PC-3 (cell line): ENCODE measurements at regions of chr12 and their contacts with region 1.

Region 1: DNA sequence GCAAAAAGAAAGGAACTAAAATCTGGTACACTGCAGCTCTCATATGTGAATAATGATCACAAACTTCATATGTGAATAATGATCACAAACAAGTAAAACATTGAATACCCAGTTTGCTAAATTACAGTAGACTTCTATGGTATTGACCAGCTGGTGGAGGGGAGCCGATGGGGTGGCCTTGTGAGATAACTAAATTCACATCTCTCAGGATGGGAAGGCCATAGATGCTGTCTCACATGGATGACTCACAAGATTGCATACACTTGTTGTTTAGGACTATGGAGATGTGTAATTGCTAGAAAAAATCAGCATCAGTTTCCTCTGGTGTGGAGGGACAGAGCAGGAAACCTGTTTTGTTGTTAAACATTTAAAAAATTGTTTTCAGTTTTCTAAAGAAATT is 49.2 kb downstream of the ACACB start:
- DNase-seq: no peak
- ATAC-seq: peak; percentile 55
- H3K4me3 ChIP-seq: no peak overlapping the region
- H3K27ac ChIP-seq: no peak overlapping the region
- H3K4me1 ChIP-seq: peaks cover 12% of the 10 kb centered on the region
- H3K27me3 ChIP-seq: no peaks in the 10 kb centered on the region
- CTCF ChIP-seq: no peak

Region 2: GRCh38 chr12:109097435-109098182 is 68.0 kb before region 1 on chr12 and contains the start of gene UNG:
- CTCF ChIA-PET with region 1: no interaction called
- POLR2A ChIA-PET with region 1: no interaction called
- intact Hi-C with region 1: no loop called
- DNase-seq: peak; percentile 98
- ATAC-seq: peak; percentile 92
- H3K4me3 ChIP-seq: peak within 1 kb of the TSS; percentile 83
- H3K27ac ChIP-seq: peak within 1 kb of the TSS; percentile 75
- H3K4me1 ChIP-seq: peaks cover 17% of the 10 kb centered on the region
- H3K27me3 ChIP-seq: no peaks in the 10 kb centered on the region
- CTCF ChIP-seq: no peak
- total RNA-seq, gene UNG: 168 and 179 TPM in 2 replicates

Region 3: DNA sequence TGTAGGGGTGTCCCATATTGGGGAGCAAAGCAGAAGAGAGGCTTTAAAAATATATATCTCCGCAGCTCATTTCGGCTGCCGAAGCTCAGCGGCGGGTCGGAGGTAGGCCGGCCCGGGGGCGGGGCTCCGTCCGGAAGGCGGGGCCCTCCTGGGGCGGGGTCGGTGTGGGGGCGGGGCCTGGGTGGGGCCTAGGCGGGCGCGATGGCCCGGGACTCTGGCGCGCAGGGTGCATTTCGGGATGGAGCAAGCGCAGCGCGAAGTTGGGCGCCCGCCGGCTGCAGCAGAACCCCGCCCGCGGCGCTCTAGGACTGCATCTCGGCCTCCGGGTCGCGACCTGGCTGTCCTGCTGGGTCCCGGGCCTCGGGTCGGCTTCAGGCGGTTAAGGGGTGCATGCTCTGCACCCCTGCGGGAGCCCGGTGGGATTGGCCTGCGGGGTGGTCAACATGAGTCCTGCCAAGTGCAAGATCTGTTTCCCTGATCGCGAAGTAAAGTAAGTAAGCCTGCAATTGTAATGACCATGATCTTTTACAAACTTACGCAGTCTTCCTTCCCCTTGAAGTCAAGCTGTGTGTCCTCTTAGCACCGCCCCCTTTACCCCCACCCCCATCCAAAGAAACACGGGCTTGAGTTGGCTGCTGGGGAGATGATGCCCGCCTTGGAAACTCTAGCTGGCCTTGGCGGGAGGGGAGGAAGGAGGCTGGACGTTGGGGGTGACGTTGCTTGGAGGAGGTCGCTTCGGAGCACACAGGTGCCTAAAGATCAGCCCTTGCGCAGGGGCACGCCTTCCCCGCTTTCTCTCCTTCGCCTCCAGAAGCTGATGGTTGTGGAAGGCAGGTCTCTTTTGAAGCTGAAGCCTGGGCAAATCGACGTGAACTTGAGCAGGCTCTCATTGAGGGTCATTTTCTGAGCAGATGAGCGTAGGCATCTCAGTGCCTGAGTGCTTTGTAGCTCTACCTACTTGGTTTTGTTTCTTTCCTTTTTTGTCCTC is 10.9 kb before region 1 on chr12:
- CTCF ChIA-PET with region 1: no interaction called
- POLR2A ChIA-PET with region 1: no interaction called
- intact Hi-C with region 1: loop called (anchors 1 kb)
- DNase-seq: peak; percentile 94
- ATAC-seq: peak; percentile 89
- H3K4me3 ChIP-seq: peak overlapping the region; percentile 89
- H3K27ac ChIP-seq: peak overlapping the region; percentile 47
- H3K4me1 ChIP-seq: peaks cover 12% of the 10 kb centered on the region
- H3K27me3 ChIP-seq: no peaks in the 10 kb centered on the region
- CTCF ChIP-seq: no peak

Region 4: DNA sequence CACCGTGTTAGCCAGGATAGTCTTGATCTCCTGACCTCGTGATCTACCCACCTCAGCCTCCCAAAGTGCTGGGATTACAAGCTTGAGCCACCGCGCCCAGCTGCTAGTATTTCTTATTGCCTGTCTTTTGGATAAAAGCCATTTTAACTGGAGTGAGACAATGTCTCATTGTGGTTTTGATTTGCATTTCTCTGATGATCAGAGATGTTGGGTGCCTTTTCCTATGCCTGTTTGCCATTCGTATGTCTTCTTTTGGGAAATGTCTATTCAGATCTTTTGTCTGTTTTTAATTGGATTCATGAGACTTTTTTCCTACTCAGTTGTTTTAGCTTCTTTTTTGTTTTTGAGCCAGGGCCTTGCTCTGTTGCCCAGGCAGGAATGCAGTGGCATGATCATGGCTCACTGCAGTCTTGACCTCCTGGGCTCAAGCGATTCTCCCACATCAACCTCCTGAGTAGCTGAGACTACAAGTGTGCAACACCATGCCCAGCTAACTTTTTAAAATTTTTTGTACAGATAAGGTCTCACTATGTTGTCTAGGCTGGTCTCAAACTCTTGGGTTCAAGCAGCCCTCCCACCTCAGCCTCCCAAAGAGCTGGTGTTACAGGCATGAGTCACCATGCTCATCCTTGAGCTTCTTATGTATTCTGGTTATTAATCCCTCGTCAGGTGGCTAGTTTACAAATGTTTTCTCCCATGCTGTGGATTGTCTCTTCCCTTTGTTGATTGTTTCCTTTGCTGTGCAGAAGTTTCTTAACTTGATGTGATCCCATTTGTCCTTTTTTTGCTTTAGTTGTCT is 16.6 kb after region 1 on chr12:
- CTCF ChIA-PET with region 1: no interaction called
- POLR2A ChIA-PET with region 1: no interaction called
- intact Hi-C with region 1: loop called (anchors 1 kb)
- DNase-seq: peak; percentile 34
- ATAC-seq: peak; percentile 78
- H3K4me3 ChIP-seq: no peak overlapping the region
- H3K27ac ChIP-seq: no peak overlapping the region
- H3K4me1 ChIP-seq: no peaks in the 10 kb centered on the region
- H3K27me3 ChIP-seq: no peaks in the 10 kb centered on the region
- CTCF ChIP-seq: no peak

Region 5: GRCh38 chr12:109192358-109192757 is 26.8 kb after region 1 on chr12:
- CTCF ChIA-PET with region 1: no interaction called
- POLR2A ChIA-PET with region 1: no interaction called
- intact Hi-C with region 1: loop called (anchors 1 kb)
- DNase-seq: peak; percentile 98
- ATAC-seq: peak; percentile 81
- H3K4me3 ChIP-seq: peak overlapping the region; percentile 45; the same call in 1 of the 2 replicates
- H3K27ac ChIP-seq: peak overlapping the region; percentile 96
- H3K4me1 ChIP-seq: peaks cover 40% of the 10 kb centered on the region
- H3K27me3 ChIP-seq: no peaks in the 10 kb centered on the region
- CTCF ChIP-seq: no peak